Heart left ventricle (tissue), 16 donors: ENCODE measurements at regions of chr4 and their contacts with region 1.

Region 1: GRCh38 chr4:88244816-88245579 is 39.4 kb downstream of the PPM1K start:
- DNase-seq: no peak
- ATAC-seq: peak in 2 of 4 donors; percentile 31 to 37
- H3K4me3 ChIP-seq: peak overlapping the region in 1 of 12 donors; percentile 15
- H3K27ac ChIP-seq: no peak overlapping the region
- H3K4me1 ChIP-seq: peaks cover 0 to 13% (median 4%) of the 10 kb centered on the region in 12 donors
- H3K27me3 ChIP-seq: no peaks in the 10 kb centered on the region
- CTCF ChIP-seq: no peak
- POLR2A ChIP-seq: no peak

Region 2: GRCh38 chr4:88275516-88275915 is 30.5 kb after region 1 on chr4:
- intact Hi-C with region 1: loop called in 1 of 10 experiments (anchors 5 kb)
- DNase-seq: no peak
- ATAC-seq: peak in 2 of 4 donors; percentile 20 to 26
- H3K4me3 ChIP-seq: no peak overlapping the region
- H3K27ac ChIP-seq: peak overlapping the region in 3 of 12 donors; percentile 1 to 30 (median 8)
- H3K4me1 ChIP-seq: peaks cover 0 to 56% (median 23%) of the 10 kb centered on the region in 12 donors
- H3K27me3 ChIP-seq: no peaks in the 10 kb centered on the region
- CTCF ChIP-seq: no peak
- POLR2A ChIP-seq: no peak